T-cell (primary cell): ENCODE measurements at regions of chr10 and their contacts with region 1.

Region 1: DNA sequence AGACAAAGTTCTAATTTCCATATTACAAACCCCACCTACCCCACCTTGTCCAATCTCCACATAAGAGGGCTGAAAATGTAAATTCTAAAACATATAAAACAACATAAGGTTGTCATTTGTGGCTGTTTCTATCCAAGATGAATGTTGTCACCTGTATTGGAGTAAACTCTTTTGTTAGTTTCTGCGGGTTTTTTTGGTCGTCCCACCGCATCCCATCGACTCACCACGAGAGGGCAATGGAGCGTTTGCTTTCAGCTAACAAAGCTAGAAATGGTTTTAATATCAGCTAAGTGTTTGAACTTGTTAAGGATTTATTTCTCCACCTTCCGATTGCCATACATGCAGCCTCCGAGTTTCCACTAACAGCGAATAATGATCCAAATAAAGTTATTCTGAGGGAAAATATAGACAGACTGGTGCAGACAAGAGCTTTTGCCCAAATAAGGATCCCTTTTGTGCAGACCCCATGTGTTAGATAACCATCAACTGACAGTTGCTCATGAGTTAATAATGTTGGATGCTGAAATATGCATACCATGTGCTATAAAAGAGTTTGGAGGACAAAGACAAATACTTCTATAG is 137.2 kb downstream of the ARID5B start:
- DNase-seq: peak; percentile 50 to 84 (median 74)
- ATAC-seq: peak; percentile 68 to 83 (median 71)
- H3K4me3 ChIP-seq: peak overlapping the region in 1 of 2 donors; percentile 15
- H3K4me3 Mint-ChIP-seq: peak overlapping the region; percentile 54 to 62 (median 58)
- H3K27ac ChIP-seq: peak overlapping the region; percentile 45
- H3K27ac Mint-ChIP-seq: peak overlapping the region; percentile 89 to 91
- H3K4me1 ChIP-seq: peaks cover 37 to 45% of the 10 kb centered on the region in 2 experiments
- H3K4me1 Mint-ChIP-seq: peaks cover 80 to 85% (median 85%) of the 10 kb centered on the region in 3 donors
- H3K27me3 ChIP-seq: no peaks in the 10 kb centered on the region
- H3K27me3 Mint-ChIP-seq: no peaks in the 10 kb centered on the region

Region 2: GRCh38 chr10:61896854-61897661 is 141.6 kb before region 1 on chr10:
- CTCF ChIA-PET with region 1: interaction called, 6 to 21 read pairs
- POLR2A ChIA-PET with region 1: no interaction called
- DNase-seq: peak in 34 of 35 experiments; percentile 2 to 87 (median 38)
- ATAC-seq: peak; percentile 54 to 67 (median 64)
- H3K4me3 ChIP-seq: peak overlapping the region; percentile 29 to 42
- H3K4me3 Mint-ChIP-seq: peak overlapping the region; percentile 76 to 83 (median 81)
- H3K27ac ChIP-seq: no peak overlapping the region
- H3K27ac Mint-ChIP-seq: peak overlapping the region; percentile 87
- H3K4me1 ChIP-seq: peaks cover 10 to 16% of the 10 kb centered on the region in 2 experiments
- H3K4me1 Mint-ChIP-seq: peaks cover 33 to 42% (median 34%) of the 10 kb centered on the region in 3 donors
- H3K27me3 ChIP-seq: no peaks in the 10 kb centered on the region
- H3K27me3 Mint-ChIP-seq: no peaks in the 10 kb centered on the region

Region 3: GRCh38 chr10:62019013-62019684 is 19.6 kb before region 1 on chr10:
- CTCF ChIA-PET with region 1: interaction called, 3 to 12 read pairs
- POLR2A ChIA-PET with region 1: interaction called, 3 read pairs
- DNase-seq: no peak
- ATAC-seq: no peak
- H3K4me3 ChIP-seq: no peak overlapping the region
- H3K4me3 Mint-ChIP-seq: no peak overlapping the region
- H3K27ac ChIP-seq: no peak overlapping the region
- H3K27ac Mint-ChIP-seq: peak overlapping the region in 1 of 2 donors; percentile 23
- H3K4me1 ChIP-seq: peaks cover 0 to 5% of the 10 kb centered on the region in 2 experiments
- H3K4me1 Mint-ChIP-seq: peaks cover 51 to 82% (median 79%) of the 10 kb centered on the region in 3 donors
- H3K27me3 ChIP-seq: no peaks in the 10 kb centered on the region
- H3K27me3 Mint-ChIP-seq: no peaks in the 10 kb centered on the region

Region 4: DNA sequence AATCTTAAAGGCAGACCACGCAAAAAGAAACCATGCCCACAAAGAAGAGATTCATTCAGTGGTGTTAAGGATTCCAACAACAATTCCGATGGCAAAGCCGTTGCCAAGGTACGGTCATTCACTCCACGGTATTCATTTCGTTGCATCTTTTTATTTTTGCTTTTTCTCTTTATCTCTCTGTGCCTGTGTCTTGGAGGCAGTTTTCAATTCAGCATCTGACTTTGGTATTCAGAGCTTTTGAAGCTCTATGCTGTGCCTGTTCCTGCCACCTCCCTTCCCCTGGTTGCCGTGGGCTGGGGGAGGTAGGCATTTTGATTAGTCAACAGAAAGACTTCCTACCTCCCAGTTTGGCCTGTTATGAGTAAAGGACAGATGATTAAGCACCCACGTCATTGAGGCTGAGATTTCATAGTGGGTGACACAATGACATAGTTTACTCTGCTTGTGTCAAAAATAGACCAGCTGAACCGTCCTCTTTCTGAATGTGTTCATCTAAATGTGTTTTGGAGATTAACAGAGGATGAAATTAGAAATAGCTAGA is 12.3 kb after region 1 on chr10:
- CTCF ChIA-PET with region 1: interaction called, 7 to 50 read pairs
- POLR2A ChIA-PET with region 1: interaction called, 14 to 25 read pairs
- DNase-seq: peak; percentile 18 to 86 (median 73)
- ATAC-seq: peak; percentile 68 to 87 (median 74)
- H3K4me3 ChIP-seq: peak overlapping the region in 1 of 2 donors; percentile 50
- H3K4me3 Mint-ChIP-seq: peak overlapping the region; percentile 90 to 93 (median 91)
- H3K27ac ChIP-seq: peak overlapping the region; percentile 90
- H3K27ac Mint-ChIP-seq: peak overlapping the region; percentile 99 to 100
- H3K4me1 ChIP-seq: peaks cover 48 to 57% of the 10 kb centered on the region in 2 experiments
- H3K4me1 Mint-ChIP-seq: peaks cover 94 to 99% (median 98%) of the 10 kb centered on the region in 3 donors
- H3K27me3 ChIP-seq: no peaks in the 10 kb centered on the region
- H3K27me3 Mint-ChIP-seq: no peaks in the 10 kb centered on the region

Region 5: DNA sequence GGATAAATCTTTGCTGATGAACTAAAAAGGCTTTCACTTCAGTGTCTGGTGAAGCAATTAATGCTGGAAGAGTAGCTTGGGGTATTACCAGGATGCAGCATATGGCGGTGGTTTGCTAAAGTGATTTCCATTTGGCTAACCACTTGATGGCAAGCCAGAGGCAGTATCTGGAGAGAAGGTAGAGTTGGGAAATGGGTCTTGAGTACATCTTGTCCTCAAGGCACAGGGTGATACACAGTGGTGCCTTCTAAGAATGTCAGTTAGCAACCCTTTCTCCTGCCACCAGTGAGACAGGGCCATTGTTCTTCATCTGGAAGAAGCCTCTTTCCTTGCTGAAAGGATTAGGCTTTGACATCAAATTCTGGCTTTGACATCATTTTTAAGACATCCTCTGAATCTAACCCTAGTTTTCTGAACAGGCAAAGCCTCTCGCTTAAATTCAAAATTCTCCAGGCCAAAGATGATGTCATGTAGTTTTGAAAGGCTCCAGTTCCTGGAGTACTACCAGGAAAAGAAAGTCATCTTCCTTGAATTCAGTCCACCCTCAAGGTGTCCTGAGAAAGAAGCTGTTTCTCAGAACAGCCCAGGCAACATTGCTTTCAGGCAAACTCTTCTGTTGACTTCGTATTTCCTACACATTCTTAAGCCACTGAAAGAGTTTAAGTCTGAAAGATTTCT is 25.2 kb after region 1 on chr10:
- CTCF ChIA-PET with region 1: interaction called in 1 of 2 experiments, 7 read pairs
- POLR2A ChIA-PET with region 1: interaction called in 1 of 2 experiments, 10 read pairs
- DNase-seq: no peak
- ATAC-seq: no peak
- H3K4me3 ChIP-seq: no peak overlapping the region
- H3K4me3 Mint-ChIP-seq: no peak overlapping the region
- H3K27ac ChIP-seq: no peak overlapping the region
- H3K27ac Mint-ChIP-seq: peak overlapping the region; percentile 36 to 72
- H3K4me1 ChIP-seq: peaks cover 2 to 4% of the 10 kb centered on the region in 2 experiments
- H3K4me1 Mint-ChIP-seq: peaks cover 42 to 79% (median 75%) of the 10 kb centered on the region in 3 donors
- H3K27me3 ChIP-seq: no peaks in the 10 kb centered on the region
- H3K27me3 Mint-ChIP-seq: no peaks in the 10 kb centered on the region

Region 6: DNA sequence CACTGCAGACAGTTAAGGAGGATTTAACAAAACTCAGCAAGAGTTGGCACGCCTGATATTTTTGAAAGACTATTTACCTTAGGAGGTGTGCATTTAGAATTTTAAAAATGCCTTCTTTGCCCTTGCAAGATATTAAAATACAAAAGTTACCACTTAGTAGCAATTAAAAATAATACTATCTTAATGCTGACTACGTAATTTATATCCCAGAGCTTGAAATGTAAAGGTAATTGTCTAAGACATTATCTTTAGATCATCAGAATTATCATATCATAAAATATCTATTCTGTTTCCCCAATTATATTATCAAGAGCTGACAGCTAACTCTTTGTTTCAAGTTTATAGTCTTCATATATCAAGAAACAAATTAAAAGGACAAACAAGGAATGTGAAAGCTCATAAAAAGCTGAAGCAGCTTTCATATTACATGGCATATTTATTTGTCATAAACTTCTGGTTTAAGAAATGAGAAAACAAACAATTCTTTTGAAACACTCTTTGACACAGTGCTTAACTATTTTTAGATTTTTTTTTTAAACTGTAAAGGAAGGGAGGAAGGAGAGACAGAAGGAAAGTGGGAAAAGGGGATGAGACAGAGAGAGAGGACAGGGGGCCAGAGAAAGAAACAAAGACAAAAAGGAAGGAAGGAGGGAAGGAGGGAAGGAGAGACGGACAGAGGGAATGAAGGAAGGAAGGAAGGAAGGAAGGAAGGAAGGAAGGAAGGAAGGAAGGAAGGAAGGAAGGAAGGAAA is 156.4 kb after region 1 on chr10:
- CTCF ChIA-PET with region 1: interaction called in 1 of 2 experiments, 10 read pairs
- POLR2A ChIA-PET with region 1: no interaction called
- DNase-seq: no peak
- ATAC-seq: no peak
- H3K4me3 ChIP-seq: no peak overlapping the region
- H3K4me3 Mint-ChIP-seq: peak overlapping the region in 1 of 3 donors; percentile 11
- H3K27ac ChIP-seq: no peak overlapping the region
- H3K27ac Mint-ChIP-seq: peak overlapping the region; percentile 31 to 57
- H3K4me1 ChIP-seq: peaks cover 0 to 11% of the 10 kb centered on the region in 2 experiments
- H3K4me1 Mint-ChIP-seq: peaks cover 16 to 23% (median 22%) of the 10 kb centered on the region in 3 donors
- H3K27me3 ChIP-seq: no peaks in the 10 kb centered on the region
- H3K27me3 Mint-ChIP-seq: no peaks in the 10 kb centered on the region